CD8-positive, alpha-beta T cell (primary cell): ENCODE measurements at regions of chr12 and their contacts with region 1.

Region 1: DNA sequence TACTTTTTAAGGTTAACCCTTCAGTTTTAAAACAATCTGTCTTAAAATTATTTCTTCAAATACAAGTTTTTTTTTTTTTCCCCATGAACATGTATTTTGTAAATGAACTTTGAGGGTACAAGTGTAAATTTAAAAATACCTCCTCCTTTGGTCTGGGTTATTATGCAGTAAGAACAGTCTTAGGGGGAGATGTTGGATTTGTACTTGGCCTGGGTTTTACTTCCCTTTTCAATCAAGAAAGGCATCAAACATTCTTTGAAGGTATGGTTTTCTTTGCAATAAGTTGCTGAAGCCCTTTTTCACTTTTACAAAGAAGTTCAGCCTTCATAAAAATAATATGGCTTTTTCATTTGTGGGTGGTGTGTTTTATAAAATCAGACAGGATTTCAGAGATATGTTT is 20.5 kb downstream of the WBP11 start:
- DNase-seq: no peak
- ATAC-seq: no peak
- H3K4me3 ChIP-seq: no peak overlapping the region
- H3K4me3 Mint-ChIP-seq: no peak overlapping the region
- H3K27ac ChIP-seq: no peak overlapping the region
- H3K27ac Mint-ChIP-seq: no peak overlapping the region
- H3K4me1 ChIP-seq: no peaks in the 10 kb centered on the region
- H3K4me1 Mint-ChIP-seq: peaks cover 12% of the 10 kb centered on the region
- H3K27me3 ChIP-seq: no peaks in the 10 kb centered on the region
- H3K27me3 Mint-ChIP-seq: no peaks in the 10 kb centered on the region
- CTCF ChIP-seq: no peak

Region 2: DNA sequence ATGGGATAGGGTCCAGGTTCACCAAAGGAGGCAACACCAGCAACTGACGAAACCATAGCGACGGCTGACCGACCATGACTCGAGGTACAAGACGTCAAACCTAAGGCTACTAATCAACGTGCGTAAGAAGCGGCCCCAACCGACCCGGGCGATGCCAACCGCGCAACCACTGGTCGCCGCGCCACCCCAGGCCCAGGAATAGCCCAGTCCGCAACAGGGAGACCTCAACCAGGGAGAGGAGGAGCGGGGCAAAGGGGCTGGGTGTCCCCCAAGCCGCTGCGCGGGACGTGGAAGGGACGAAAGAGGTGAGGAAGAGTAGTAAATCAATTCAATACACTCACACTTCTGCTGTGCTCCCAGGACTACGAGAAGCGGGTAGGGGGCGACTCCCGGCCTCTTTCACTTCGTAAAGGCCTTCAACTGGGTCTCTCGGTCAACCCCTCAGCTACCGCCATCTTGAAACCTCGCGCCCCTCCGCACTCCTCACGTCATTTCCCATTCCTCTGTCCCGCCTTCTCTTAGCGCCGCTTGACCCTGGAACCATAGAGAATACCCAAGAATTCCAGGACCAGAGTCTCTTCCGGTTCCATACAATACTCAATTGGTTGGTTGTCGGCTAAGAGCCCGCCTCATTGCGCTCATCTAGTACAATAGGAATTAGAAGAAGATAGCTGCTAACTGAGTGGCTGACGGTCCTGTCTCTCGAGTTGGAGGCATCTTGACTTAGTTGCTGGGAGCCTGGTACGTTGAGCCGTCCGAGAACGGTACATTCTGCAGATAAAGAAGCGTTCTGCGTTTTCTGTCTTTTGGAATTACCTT is 20.5 kb after region 1 on chr12 and contains the starts of genes C12orf60 and WBP11:
- CTCF ChIA-PET with region 1: interaction called, 4 read pairs
- POLR2A ChIA-PET with region 1: interaction called, 4 read pairs
- intact Hi-C with region 1: loop called in 1 of 2 experiments (anchors 2 kb)
- DNase-seq: peak; percentile 76 to 98 (median 87)
- ATAC-seq: peak; percentile 94
- H3K4me3 ChIP-seq: peak within 1 kb of the TSS; percentile 86 to 95
- H3K4me3 Mint-ChIP-seq: no peak within 1 kb of the TSS
- H3K27ac ChIP-seq: peak within 1 kb of the TSS; percentile 91 to 98
- H3K27ac Mint-ChIP-seq: no peak within 1 kb of the TSS
- H3K4me1 ChIP-seq: peaks cover 28% of the 10 kb centered on the region
- H3K4me1 Mint-ChIP-seq: peaks cover 12% of the 10 kb centered on the region
- H3K27me3 ChIP-seq: no peaks in the 10 kb centered on the region
- H3K27me3 Mint-ChIP-seq: no peaks in the 10 kb centered on the region
- CTCF ChIP-seq: no peak
- total RNA-seq, gene C12orf60: 0.14 TPM in 1 of 2 experiments, not detected in the other
- total RNA-seq, gene WBP11: 171 to 184 TPM